A549 (cell line): ENCODE measurements at regions of chr4 and their contacts with region 1.

Region 1: GRCh38 chr4:81272671-81273070 is 57.6 kb upstream of the PRKG2 start:
- DNase-seq: no peak
- ATAC-seq: no peak
- H3K4me3 ChIP-seq: no peak overlapping the region
- H3K27ac ChIP-seq: no peak overlapping the region
- H3K4me1 ChIP-seq: no peaks in the 10 kb centered on the region
- CTCF ChIP-seq: no peak
- EP300 ChIP-seq: no peak
- POLR2A ChIP-seq: no peak
- RAD21 ChIP-seq: no peak

Region 2: GRCh38 chr4:81260443-81261101 is 12.1 kb before region 1 on chr4:
- CTCF ChIA-PET with region 1: interaction called, 10 read pairs
- POLR2A ChIA-PET with region 1: no interaction called
- DNase-seq: no peak
- ATAC-seq: no peak
- H3K4me3 ChIP-seq: no peak overlapping the region
- H3K27ac ChIP-seq: no peak overlapping the region
- H3K4me1 ChIP-seq: peaks cover 16% of the 10 kb centered on the region; the same call in 1 of the 3 replicates
- CTCF ChIP-seq: peak; percentile 18; the same call in 1 of the 3 replicates
- EP300 ChIP-seq: no peak
- POLR2A ChIP-seq: no peak
- RAD21 ChIP-seq: no peak; a peak in 1 of 5 replicates